MCF 10A (cell line): ENCODE measurements at regions of chr1 and their contacts with region 1.

Region 1: GRCh38 chr1:107529502-107530149 is 388.8 kb downstream of the NTNG1 start:
- DNase-seq: peak; percentile 75
- H3K4me3 Mint-ChIP-seq: no peak overlapping the region
- H3K27ac Mint-ChIP-seq: peak overlapping the region; percentile 46
- H3K4me1 Mint-ChIP-seq: peaks cover 39% of the 10 kb centered on the region
- H3K27me3 Mint-ChIP-seq: no peaks in the 10 kb centered on the region
- CTCF ChIP-seq: peak; percentile 79

Region 2: GRCh38 chr1:107073493-107073892 is 456.1 kb before region 1 on chr1:
- CTCF ChIA-PET with region 1: no interaction called
- POLR2A ChIA-PET with region 1: no interaction called
- intact Hi-C with region 1: no loop called
- DNase-seq: no peak
- H3K4me3 Mint-ChIP-seq: no peak overlapping the region
- H3K27ac Mint-ChIP-seq: no peak overlapping the region
- H3K4me1 Mint-ChIP-seq: no peaks in the 10 kb centered on the region
- H3K27me3 Mint-ChIP-seq: no peaks in the 10 kb centered on the region
- CTCF ChIP-seq: no peak

Region 3: DNA sequence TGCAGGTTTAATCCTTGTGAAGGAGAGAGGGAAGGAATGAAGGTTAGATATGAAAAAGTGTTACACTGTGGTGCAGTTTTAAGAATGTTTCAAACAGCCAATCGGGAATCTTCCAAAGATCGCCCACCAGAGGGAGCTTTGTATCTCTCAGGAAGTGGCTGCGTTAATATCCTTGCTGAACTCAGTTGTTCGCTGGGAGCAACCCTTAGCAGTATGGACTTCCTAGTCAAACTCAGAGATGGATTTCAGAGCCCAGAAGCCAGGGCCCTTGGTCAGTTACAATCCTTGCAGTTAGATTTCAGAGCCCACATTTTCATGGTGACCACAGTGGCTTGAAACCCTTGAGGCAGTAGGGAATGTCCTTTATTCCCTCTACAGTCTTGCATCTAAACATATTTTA is 252.6 kb before region 1 on chr1:
- CTCF ChIA-PET with region 1: interaction called, 223 read pairs
- POLR2A ChIA-PET with region 1: interaction called, 29 read pairs
- intact Hi-C with region 1: loop called (anchors 1 kb)
- DNase-seq: peak; percentile 63
- H3K4me3 Mint-ChIP-seq: no peak overlapping the region
- H3K27ac Mint-ChIP-seq: no peak overlapping the region
- H3K4me1 Mint-ChIP-seq: peaks cover 5% of the 10 kb centered on the region
- H3K27me3 Mint-ChIP-seq: no peaks in the 10 kb centered on the region
- CTCF ChIP-seq: peak; percentile 79

Region 4: GRCh38 chr1:107430540-107431228 is 98.9 kb before region 1 on chr1:
- CTCF ChIA-PET with region 1: interaction called, 240 read pairs
- POLR2A ChIA-PET with region 1: interaction called, 6 read pairs
- intact Hi-C with region 1: loop called (anchors 2 kb)
- DNase-seq: peak; percentile 70
- H3K4me3 Mint-ChIP-seq: no peak overlapping the region
- H3K27ac Mint-ChIP-seq: no peak overlapping the region
- H3K4me1 Mint-ChIP-seq: peaks cover 6% of the 10 kb centered on the region
- H3K27me3 Mint-ChIP-seq: no peaks in the 10 kb centered on the region
- CTCF ChIP-seq: peak; percentile 73

Region 5: DNA sequence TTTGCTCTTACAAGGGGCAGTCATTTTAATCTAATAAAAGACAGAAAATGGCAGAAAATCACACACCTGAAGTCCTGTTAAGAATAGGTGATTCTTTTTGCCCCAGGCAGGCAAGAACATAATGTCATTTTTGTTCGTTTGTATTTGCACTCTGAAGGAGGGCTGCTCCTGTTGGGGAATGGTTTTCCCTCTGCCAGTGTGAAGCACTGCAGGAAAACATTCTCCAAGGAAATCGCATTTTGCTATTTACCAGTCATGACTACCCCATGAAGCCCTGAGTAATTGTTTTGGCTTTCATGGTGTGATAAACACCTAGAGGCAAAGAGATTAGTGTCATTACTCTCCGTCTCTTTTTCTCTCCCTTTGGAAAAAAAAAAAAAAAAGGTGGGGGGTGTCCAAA is 43.3 kb before region 1 on chr1:
- CTCF ChIA-PET with region 1: interaction called, 27 read pairs
- POLR2A ChIA-PET with region 1: interaction called, 36 read pairs
- intact Hi-C with region 1: no loop called
- DNase-seq: no peak
- H3K4me3 Mint-ChIP-seq: no peak overlapping the region
- H3K27ac Mint-ChIP-seq: peak overlapping the region; percentile 27
- H3K4me1 Mint-ChIP-seq: peaks cover 26% of the 10 kb centered on the region
- H3K27me3 Mint-ChIP-seq: no peaks in the 10 kb centered on the region
- CTCF ChIP-seq: no peak

Region 6: DNA sequence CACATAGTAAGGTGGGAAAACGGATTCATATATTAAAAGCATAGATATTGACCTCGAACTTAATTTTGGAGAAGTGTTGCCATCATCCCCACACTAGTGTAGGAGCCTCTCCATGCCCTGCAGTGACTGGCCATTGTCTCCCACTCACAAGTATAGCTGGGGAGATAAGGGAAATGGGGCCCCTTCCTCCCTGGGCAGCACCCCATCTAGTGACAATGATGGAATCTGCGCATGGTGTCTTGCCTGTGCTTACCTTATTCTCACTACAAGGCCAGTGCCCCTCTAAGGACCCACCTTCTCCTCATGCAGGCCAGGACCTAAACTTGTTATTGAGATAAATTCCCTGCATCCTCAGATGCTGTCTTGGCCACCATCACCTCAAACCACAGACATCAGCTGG is 13.9 kb before region 1 on chr1:
- CTCF ChIA-PET with region 1: interaction called, 21 read pairs
- POLR2A ChIA-PET with region 1: interaction called, 3 read pairs
- intact Hi-C with region 1: no loop called
- DNase-seq: no peak
- H3K4me3 Mint-ChIP-seq: no peak overlapping the region
- H3K27ac Mint-ChIP-seq: no peak overlapping the region
- H3K4me1 Mint-ChIP-seq: no peaks in the 10 kb centered on the region
- H3K27me3 Mint-ChIP-seq: no peaks in the 10 kb centered on the region
- CTCF ChIP-seq: no peak

Region 7: GRCh38 chr1:107572653-107573211 is 43.1 kb after region 1 on chr1:
- CTCF ChIA-PET with region 1: interaction called, 10 read pairs
- POLR2A ChIA-PET with region 1: interaction called, 39 read pairs
- intact Hi-C with region 1: no loop called
- DNase-seq: peak; percentile 95
- H3K4me3 Mint-ChIP-seq: no peak overlapping the region
- H3K27ac Mint-ChIP-seq: peak overlapping the region; percentile 75
- H3K4me1 Mint-ChIP-seq: peaks cover 26% of the 10 kb centered on the region
- H3K27me3 Mint-ChIP-seq: no peaks in the 10 kb centered on the region
- CTCF ChIP-seq: no peak

Region 8: DNA sequence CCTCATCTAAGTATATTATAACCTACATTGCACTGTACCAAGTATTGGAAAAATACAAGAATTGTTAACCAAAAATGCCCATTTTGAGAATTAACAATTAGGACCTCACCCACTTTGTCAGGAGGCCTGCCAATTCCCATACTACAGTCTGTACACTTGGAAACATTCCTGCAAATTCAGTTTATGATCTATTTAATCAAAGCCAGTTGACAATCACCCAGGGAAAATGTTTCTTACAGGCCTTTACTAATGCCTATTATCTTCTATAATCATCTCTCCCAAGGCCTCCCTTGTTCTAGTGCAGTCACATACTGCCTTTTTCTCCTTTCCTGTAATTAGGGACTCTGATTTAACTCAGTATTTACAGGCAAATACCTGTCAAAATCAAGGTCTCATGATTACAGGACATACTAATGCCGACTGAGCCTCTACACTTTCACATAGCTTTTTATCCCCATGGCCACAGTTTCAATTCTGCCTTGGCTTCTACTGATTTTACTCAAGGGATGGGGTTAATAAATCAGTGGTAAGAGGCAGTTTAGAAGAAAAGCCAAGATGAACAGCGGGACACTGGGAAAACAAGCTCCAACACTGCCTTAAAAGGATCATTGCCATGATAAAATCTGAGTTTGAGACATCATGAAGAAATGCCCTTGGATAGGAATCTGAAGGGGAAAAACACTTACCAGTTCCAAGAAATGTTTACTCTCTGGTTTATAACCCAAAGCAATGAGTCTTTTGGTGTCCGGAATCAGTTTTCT is 96.6 kb after region 1 on chr1:
- CTCF ChIA-PET with region 1: no interaction called
- POLR2A ChIA-PET with region 1: no interaction called
- intact Hi-C with region 1: no loop called
- DNase-seq: no peak
- H3K4me3 Mint-ChIP-seq: no peak overlapping the region
- H3K27ac Mint-ChIP-seq: no peak overlapping the region
- H3K4me1 Mint-ChIP-seq: peaks cover 7% of the 10 kb centered on the region
- H3K27me3 Mint-ChIP-seq: no peaks in the 10 kb centered on the region
- CTCF ChIP-seq: no peak

Region 9: GRCh38 chr1:107750358-107750959 is 220.8 kb after region 1 on chr1:
- CTCF ChIA-PET with region 1: interaction called, 121 read pairs
- POLR2A ChIA-PET with region 1: interaction called, 11 read pairs
- intact Hi-C with region 1: loop called (anchors 1 kb)
- DNase-seq: peak; percentile 87
- H3K4me3 Mint-ChIP-seq: no peak overlapping the region
- H3K27ac Mint-ChIP-seq: no peak overlapping the region
- H3K4me1 Mint-ChIP-seq: no peaks in the 10 kb centered on the region
- H3K27me3 Mint-ChIP-seq: no peaks in the 10 kb centered on the region
- CTCF ChIP-seq: peak; percentile 77